ENCODE measurements at regions of chr10 and their contacts with region 1.

Region 1: GRCh38 chr10:88810196-88810961 is 7.8 kb downstream of the LIPM start:
- DNase-seq: peak; percentile 33
- ATAC-seq: peak; percentile 91
- H3K4me3 ChIP-seq: no peak overlapping the region; a peak in 1 of 4 replicates
- H3K27ac ChIP-seq: no peak overlapping the region; the same call in 1 of the 2 replicates
- H3K4me1 ChIP-seq: no peaks in the 10 kb centered on the region
- H3K27me3 ChIP-seq: no peaks in the 10 kb centered on the region
- CTCF ChIP-seq: peak; percentile 88

Region 2: DNA sequence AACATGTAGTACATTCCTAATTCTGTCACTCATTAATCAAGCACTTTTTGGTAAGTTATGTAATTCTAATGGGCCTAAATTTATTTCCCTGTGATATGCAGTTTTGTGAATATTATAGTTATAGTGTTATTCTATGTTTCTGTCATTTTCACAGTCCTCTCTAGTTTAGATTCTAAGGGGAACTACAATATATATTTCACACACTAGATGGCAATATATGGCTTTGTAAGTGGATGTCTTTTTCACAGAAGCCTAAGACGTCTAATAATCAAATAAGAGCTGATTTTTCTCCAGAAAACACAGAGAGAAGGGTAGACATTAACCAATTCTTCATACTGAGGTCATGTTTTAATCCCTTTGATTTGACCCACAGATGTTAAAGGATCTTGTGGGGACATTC is 245.3 kb before region 1 on chr10:
- CTCF ChIA-PET with region 1: interaction called, 10 read pairs
- POLR2A ChIA-PET with region 1: no interaction called
- in situ Hi-C with region 1: no loop called
- intact Hi-C with region 1: loop called (anchors 1 kb)
- DNase-seq: no peak
- ATAC-seq: peak; percentile 91
- H3K4me3 ChIP-seq: no peak overlapping the region
- H3K27ac ChIP-seq: no peak overlapping the region; the same call in 1 of the 2 replicates
- H3K4me1 ChIP-seq: no peaks in the 10 kb centered on the region
- H3K27me3 ChIP-seq: no peaks in the 10 kb centered on the region
- CTCF ChIP-seq: peak; percentile 59; the same call in 1 of the 2 replicates

Region 3: GRCh38 chr10:88582806-88583583 is 227.4 kb before region 1 on chr10 and contains the start of gene RNLS:
- CTCF ChIA-PET with region 1: interaction called, 5 read pairs
- POLR2A ChIA-PET with region 1: no interaction called
- in situ Hi-C with region 1: no loop called
- intact Hi-C with region 1: loop called (anchors 5 kb)
- DNase-seq: peak; percentile 30
- ATAC-seq: peak; percentile 96
- H3K4me3 ChIP-seq: peak within 1 kb of the TSS; percentile 74 to 78
- H3K27ac ChIP-seq: peak within 1 kb of the TSS; percentile 93
- H3K4me1 ChIP-seq: peaks cover 5% of the 10 kb centered on the region
- H3K27me3 ChIP-seq: 0 out of 2 replicates have a peak, but pooled peaks cover 2% of the 10 kb centered on the region
- CTCF ChIP-seq: peak; percentile 97
- total RNA-seq, gene RNLS: 11.4 TPM

Region 4: DNA sequence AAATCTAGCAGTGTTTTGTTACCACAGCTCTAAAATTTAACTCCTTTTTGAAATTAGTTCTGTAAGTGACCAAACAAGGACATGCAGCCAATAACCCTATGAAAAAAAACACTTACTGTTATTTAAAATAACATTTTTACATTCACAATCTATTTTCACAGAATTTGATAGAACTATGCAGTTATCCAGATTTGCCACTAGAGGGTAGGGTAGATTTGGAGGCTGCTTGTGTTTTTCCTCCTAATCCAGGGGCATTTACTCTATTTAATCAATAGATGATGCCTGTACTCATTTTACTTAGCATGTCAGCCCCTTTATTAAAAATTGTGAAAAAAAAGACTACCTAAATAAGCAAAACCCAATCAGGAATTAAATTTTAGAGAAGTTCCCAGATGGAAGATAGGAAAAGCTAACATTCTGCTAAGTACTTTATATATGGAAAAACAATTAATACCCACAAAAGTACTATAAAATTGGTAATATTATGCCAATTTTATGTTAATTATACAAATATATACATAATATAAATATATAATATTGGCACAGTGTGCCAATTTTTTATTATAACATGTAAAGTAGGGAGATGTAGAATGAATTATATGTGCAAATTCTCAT is 122.4 kb before region 1 on chr10:
- CTCF ChIA-PET with region 1: no interaction called
- POLR2A ChIA-PET with region 1: no interaction called
- in situ Hi-C with region 1: no loop called
- intact Hi-C with region 1: loop called (anchors 5 kb)
- DNase-seq: no peak
- ATAC-seq: no peak
- H3K4me3 ChIP-seq: no peak overlapping the region
- H3K27ac ChIP-seq: peak overlapping the region; percentile 24; the same call in 1 of the 2 replicates
- H3K4me1 ChIP-seq: no peaks in the 10 kb centered on the region
- H3K27me3 ChIP-seq: no peaks in the 10 kb centered on the region
- CTCF ChIP-seq: peak; percentile 86; the same call in 1 of the 2 replicates

Region 5: DNA sequence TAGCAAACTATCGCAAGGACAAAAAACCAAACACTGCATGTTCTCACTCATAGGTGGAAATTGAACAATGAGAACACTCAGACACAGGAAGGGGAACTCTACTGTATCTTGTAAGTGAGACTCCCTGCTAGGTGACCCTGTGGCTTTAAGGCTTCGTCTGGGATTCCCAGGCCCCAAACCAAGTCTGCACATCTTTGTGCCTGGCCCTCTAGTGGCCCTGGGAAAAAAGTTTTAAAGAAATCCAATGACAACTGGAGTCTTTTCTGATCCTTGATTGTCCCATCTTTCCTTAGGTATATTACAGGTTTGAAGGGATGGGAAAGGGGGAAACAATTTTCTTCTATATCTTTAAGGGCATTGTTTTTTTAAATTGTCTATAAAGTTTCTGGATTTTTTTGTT is 18.5 kb before region 1 on chr10:
- CTCF ChIA-PET with region 1: interaction called, 12 read pairs
- POLR2A ChIA-PET with region 1: no interaction called
- in situ Hi-C with region 1: no loop called
- intact Hi-C with region 1: no loop called
- DNase-seq: peak; percentile 10
- ATAC-seq: peak; percentile 90
- H3K4me3 ChIP-seq: no peak overlapping the region
- H3K27ac ChIP-seq: no peak overlapping the region
- H3K4me1 ChIP-seq: peaks cover 4% of the 10 kb centered on the region; the same call in 1 of the 2 replicates
- H3K27me3 ChIP-seq: no peaks in the 10 kb centered on the region
- CTCF ChIP-seq: peak; percentile 85

Measured in Panc1 (cell line).